Dendritic cell treated with granulocyte-macrophage colony-stimulating factor and Interleukin-4, amounts not matched to agents 40 ng/mL and 50 ng/mL, for 4 days (primary cell): ENCODE measurements at regions of chr21 and their contacts with region 1.

Region 1: DNA sequence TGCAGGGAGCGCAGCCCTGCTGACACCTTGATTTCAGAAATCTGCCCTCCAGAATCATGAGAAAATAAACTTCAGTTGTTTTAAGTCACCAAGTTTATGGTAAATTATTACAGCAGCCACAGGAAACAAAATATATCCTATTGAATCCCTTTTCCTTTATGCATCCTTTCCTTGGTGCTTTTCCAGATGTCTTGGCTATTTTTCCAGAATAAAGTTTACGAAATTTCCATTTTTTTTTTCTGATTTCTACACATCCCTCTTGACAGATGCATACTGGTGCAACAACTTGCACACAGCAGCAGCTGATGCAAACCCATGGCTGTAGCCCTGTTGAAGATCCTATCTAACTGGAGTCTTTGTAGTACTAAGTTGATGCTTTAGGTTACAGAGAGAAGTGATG is 111.1 kb upstream of the KCNE2 start:
- H3K4me3 Mint-ChIP-seq: no peak overlapping the region
- H3K27ac Mint-ChIP-seq: no peak overlapping the region
- H3K4me1 Mint-ChIP-seq: no peaks in the 10 kb centered on the region
- H3K27me3 Mint-ChIP-seq: peaks cover 13% of the 10 kb centered on the region

Region 2: DNA sequence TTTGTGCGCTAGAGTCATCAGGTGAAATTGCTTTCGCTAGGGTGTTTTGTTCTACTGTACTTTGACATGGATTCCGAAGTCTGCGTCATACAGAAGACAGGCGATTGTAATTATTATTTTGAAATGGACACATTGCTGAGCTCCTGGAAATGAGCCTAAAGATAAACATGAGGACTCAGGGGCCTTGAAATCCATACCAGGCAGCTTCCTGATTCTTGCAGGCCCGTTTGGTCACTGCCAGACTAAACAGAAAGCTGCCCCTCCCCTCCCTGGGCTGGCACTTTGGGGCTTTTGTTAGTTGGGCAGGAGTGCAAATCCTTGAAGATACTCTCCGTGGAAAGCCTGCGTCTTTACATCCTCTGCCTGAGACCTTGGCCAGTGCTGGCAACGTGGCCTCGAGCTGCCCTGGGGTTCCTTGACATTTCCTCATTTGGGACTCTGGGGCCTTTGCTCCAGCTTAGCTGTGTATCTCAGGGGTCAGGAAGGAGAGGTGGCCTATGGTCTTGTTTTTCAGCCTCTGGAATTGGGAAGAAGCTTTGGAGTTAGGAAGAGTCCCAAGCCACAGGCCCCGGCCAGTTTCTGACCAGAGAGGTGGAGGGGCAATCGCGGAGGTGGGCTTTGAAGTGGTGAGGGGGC is 84.1 kb after region 1 on chr21:
- intact Hi-C with region 1: loop called (anchors 10 kb)
- H3K4me3 Mint-ChIP-seq: no peak overlapping the region
- H3K27ac Mint-ChIP-seq: no peak overlapping the region
- H3K4me1 Mint-ChIP-seq: peaks cover 15% of the 10 kb centered on the region
- H3K27me3 Mint-ChIP-seq: peaks cover 5% of the 10 kb centered on the region

Region 3: GRCh38 chr21:34510148-34511142 is 257.7 kb after region 1 on chr21:
- intact Hi-C with region 1: no loop called
- H3K4me3 Mint-ChIP-seq: peak overlapping the region; percentile 77
- H3K27ac Mint-ChIP-seq: peak overlapping the region; percentile 64
- H3K4me1 Mint-ChIP-seq: peaks cover 58% of the 10 kb centered on the region
- H3K27me3 Mint-ChIP-seq: no peaks in the 10 kb centered on the region